Right ventricle myocardium superior (tissue), 1 donor: ENCODE measurements at regions of chr5 and their contacts with region 1.

Region 1: DNA sequence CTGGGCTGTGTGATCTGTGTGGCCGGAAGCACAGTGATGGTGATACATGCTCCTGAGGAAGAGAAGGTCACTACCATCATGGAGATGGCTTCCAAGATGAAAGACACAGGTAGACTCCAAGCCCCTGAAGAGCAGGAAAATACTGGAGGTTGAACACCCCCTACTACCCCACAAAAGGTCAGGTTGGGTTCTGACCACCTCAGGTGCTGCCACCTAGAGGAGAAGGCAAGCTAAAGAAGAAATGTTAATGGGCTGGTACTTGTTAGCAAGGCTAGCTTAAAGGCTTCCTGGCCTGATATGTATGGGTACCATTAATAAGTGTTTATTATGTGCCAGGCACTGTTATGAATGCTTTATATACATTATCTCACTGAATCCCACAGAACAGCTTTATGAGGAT is 11.7 kb downstream of the NIPAL4 start:
- DNase-seq: no peak
- ATAC-seq: no peak

Region 2: GRCh38 chr5:157431544-157432200 is 40.0 kb before region 1 on chr5:
- intact Hi-C with region 1: loop called (anchors 5 kb)
- DNase-seq: no peak
- ATAC-seq: peak; percentile 85

Region 3: GRCh38 chr5:157558041-157558595 is 86.4 kb after region 1 on chr5:
- intact Hi-C with region 1: no loop called
- DNase-seq: no peak
- ATAC-seq: no peak

Region 4: DNA sequence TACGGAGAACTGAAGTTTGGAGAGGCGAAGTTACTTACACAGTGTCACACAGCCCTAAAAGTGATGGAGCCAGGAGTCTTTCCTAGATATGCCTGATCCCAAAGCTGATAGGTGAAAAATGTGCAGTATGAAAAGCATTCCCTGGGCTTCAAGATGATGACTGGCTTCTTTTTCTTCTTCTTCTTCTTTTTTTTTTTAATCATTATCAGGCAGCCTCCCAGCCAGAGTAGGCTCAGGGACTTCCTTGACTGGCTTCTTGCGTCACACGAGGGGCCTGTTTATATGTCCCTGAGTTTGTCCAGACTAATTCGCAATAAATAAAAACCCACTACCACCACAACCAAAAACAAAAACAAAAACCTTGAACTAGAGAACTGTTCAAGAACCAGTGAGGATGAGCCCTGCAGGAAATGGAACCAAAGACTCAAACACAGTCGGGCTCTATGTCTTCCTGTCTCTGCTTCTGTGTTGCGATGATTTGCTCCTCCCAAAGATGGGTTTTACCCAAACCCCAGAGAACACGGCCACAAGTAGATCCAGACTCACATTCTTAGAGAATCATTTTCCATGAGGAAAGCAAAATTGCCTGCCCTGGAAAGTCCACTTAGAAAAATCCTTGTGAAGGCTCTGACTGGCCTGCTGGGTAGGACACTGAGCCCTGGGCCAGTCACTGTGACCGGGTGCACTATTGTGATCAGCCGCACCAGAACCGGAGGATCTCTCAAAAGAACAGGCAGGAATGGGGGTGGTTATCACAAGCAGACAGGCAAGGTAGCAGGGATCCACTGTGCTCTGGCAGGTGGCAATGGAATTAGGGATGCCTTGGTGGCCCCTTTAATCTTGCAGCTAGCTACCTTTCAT is 141.9 kb after region 1 on chr5:
- intact Hi-C with region 1: no loop called
- DNase-seq: no peak
- ATAC-seq: no peak